A673 (cell line): ENCODE measurements at regions of chr19 and their contacts with region 1.

Region 1: GRCh38 chr19:51688672-51689571 is 4.2 kb upstream of the SPACA6 start:
- DNase-seq: peak; percentile 94
- H3K4me3 ChIP-seq: peak overlapping the region; percentile 86
- H3K27ac ChIP-seq: peak overlapping the region; percentile 83
- H3K4me1 ChIP-seq: peaks cover 21% of the 10 kb centered on the region
- H3K27me3 ChIP-seq: no peaks in the 10 kb centered on the region
- CTCF ChIP-seq: no peak

Region 2: DNA sequence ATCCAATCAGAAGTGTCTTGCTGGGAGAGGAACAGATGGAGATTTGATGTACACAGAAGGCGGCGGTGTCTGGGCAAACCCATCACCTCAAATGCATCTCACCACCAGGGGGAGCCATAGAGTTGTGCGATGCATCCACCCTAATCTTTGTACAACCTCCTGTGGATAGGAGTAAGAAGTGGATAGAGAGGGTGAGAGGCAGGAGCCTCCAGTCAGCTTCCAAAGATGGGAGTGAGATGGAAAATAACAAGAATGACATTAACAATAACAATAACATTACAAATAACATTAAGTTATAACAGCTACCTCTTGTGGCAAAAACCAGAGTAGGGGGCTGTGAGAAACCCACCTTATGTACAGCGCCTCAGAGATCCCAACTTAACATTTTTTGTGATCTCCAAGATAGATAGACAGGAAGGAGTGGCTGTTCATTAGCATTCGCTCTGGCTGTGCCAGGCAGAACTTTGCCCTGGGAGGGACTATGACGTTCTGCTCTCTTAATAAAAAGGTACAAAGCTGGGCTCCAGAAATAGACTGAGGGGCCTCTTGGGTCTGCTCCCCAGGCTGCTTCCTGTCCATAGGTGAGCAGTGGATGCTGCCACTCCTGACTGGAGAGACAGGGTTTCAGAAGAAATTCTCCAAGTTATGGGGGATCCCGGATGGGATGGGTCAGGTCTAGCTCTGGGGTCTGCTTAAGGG is 215.8 kb before region 1 on chr19:
- CTCF ChIA-PET with region 1: no interaction called
- POLR2A ChIA-PET with region 1: no interaction called
- intact Hi-C with region 1: no loop called
- DNase-seq: peak; percentile 81
- H3K4me3 ChIP-seq: no peak overlapping the region
- H3K27ac ChIP-seq: no peak overlapping the region
- H3K4me1 ChIP-seq: no peaks in the 10 kb centered on the region
- H3K27me3 ChIP-seq: peaks cover 59% of the 10 kb centered on the region
- CTCF ChIP-seq: peak; percentile 83

Region 3: DNA sequence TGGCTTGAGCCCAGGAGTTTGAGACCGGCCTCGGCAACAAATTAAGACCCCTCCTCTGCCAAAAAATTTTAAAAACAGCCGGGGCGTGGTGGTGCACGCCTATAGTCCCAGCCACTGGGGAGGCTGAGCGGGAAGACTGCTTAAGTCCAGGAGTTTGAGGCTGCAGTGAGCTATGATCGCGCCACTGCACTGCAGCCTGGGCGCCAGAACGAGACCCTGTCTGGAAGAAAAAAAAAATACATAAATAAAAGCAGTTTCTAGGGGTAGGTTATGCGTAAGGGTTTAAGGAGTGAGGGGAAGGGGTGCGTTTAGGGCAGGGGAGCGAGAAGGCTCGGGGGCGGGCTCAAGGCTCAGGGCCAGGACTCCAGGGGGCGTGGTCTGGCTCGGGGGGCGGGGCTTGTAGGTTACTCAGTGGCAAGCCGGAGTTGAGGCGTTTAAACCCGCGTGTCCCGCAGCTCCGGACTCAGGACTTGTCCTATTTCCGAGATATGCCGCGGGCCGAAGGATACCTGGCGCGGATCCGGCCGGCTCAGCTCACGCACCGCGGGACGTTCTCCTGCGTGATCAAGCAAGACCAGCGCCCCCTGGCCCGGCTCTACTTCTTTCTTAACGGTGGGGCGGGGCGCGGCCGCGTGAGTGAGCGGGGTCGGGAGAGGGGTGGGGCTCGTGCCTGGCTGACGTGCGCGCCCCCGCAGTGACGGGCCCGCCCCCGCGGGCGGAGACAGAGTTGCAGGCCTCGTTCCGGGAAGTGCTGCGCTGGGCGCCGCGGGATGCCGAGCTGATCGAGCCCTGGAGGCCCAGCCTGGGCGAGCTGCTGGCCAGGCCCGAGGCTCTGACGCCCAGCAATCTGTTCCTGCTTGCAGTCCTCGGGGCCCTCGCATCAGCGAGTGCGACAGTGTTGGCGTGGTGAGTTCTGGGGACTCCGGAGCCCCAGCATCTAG is 14.9 kb after region 1 on chr19:
- CTCF ChIA-PET with region 1: interaction called, 12 read pairs
- POLR2A ChIA-PET with region 1: interaction called, 5 read pairs
- intact Hi-C with region 1: no loop called
- DNase-seq: peak; percentile 96
- H3K4me3 ChIP-seq: peak overlapping the region; percentile 62
- H3K27ac ChIP-seq: peak overlapping the region; percentile 98
- H3K4me1 ChIP-seq: peaks cover 6% of the 10 kb centered on the region
- H3K27me3 ChIP-seq: no peaks in the 10 kb centered on the region
- CTCF ChIP-seq: peak; percentile 62

Region 4: DNA sequence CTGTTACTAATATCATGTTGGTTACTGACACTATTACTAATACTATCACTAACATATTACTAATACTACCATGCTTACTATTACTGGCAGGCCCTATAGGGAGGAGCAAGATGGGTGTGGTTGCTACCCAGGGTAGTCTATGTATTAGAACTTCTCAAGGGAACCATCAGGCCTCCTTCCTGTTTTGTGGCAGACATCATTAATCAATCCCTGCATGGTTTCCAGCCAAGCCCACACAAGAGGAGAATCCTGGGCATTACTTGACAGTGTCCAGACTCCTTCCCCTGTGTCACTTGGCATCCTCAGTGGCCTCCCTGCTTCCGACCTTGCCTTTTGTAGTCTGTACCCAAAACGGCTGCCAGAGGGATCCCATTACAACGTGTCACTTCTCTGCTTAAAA is 25.9 kb after region 1 on chr19:
- CTCF ChIA-PET with region 1: no interaction called
- POLR2A ChIA-PET with region 1: no interaction called
- intact Hi-C with region 1: no loop called
- DNase-seq: no peak
- H3K4me3 ChIP-seq: no peak overlapping the region
- H3K27ac ChIP-seq: no peak overlapping the region
- H3K4me1 ChIP-seq: no peaks in the 10 kb centered on the region
- H3K27me3 ChIP-seq: peaks cover 47% of the 10 kb centered on the region
- CTCF ChIP-seq: no peak

Region 5: DNA sequence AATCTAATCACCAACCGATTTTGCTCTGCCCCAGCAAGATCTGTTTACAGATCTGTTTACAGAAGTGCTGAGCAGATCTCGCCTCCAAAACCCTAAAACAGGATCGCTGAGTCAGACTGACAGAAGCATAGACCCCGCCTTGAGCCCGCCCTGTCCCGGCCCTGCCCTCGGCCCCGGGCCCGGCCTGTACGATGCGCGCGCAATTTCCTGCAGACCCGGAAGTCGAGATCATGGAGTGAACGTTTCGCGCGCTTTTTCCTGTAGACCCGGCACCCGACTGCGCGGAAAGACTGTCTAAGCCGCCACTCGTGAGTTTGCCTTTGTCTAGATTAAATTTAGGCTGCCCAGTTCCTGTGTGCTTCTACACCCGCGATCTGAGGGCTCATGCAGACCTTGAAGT is 740.0 kb after region 1 on chr19 and contains the start of gene ZNF534:
- CTCF ChIA-PET with region 1: no interaction called
- POLR2A ChIA-PET with region 1: interaction called, 15 read pairs
- intact Hi-C with region 1: no loop called
- DNase-seq: no peak
- H3K4me3 ChIP-seq: no peak within 1 kb of the TSS
- H3K27ac ChIP-seq: no peak within 1 kb of the TSS
- H3K4me1 ChIP-seq: no peaks in the 10 kb centered on the region
- H3K27me3 ChIP-seq: no peaks in the 10 kb centered on the region
- CTCF ChIP-seq: no peak
- total RNA-seq, gene ZNF534: not detected in 2 replicates